Sigmoid colon (tissue), 7 donors: ENCODE measurements at regions of chr16 and their contacts with region 1.

Region 1: GRCh38 chr16:19086322-19087199 is 19.1 kb downstream of the COQ7 start:
- DNase-seq: peak; percentile 90
- H3K4me3 ChIP-seq: peak overlapping the region; percentile 26 to 49 (median 44)
- H3K27ac ChIP-seq: peak overlapping the region in 3 of 4 donors; percentile 4 to 44 (median 40)
- H3K4me1 ChIP-seq: peaks cover 0 to 16% (median 7%) of the 10 kb centered on the region in 4 donors
- H3K27me3 ChIP-seq: no peaks in the 10 kb centered on the region
- CTCF ChIP-seq: peak; percentile 91 to 99 (median 96)
- EP300 ChIP-seq: no peak
- POLR2A ChIP-seq: no peak

Region 2: GRCh38 chr16:19113453-19114351 is 27.1 kb after region 1 on chr16 and contains the start of gene ITPRIPL2:
- intact Hi-C with region 1: loop called (anchors 2 kb)
- DNase-seq: peak; percentile 95
- H3K4me3 ChIP-seq: peak within 1 kb of the TSS; percentile 57 to 90 (median 69)
- H3K27ac ChIP-seq: peak within 1 kb of the TSS; percentile 91 to 97 (median 96)
- H3K4me1 ChIP-seq: peaks cover 0 to 52% (median 43%) of the 10 kb centered on the region in 4 donors
- H3K27me3 ChIP-seq: no peaks in the 10 kb centered on the region
- CTCF ChIP-seq: no peak
- EP300 ChIP-seq: no peak
- POLR2A ChIP-seq: peak; percentile 46 to 71
- total RNA-seq, gene ITPRIPL2: 28.1 to 61.6 (median 44.2) TPM

Region 3: GRCh38 chr16:19167710-19168370 is 81.3 kb after region 1 on chr16 and contains the start of gene SYT17:
- intact Hi-C with region 1: loop called (anchors 1 kb)
- DNase-seq: no peak
- H3K4me3 ChIP-seq: peak within 1 kb of the TSS; percentile 26 to 53 (median 46)
- H3K27ac ChIP-seq: peak within 1 kb of the TSS in 1 of 4 donors; percentile 65
- H3K4me1 ChIP-seq: peaks cover 0 to 18% (median 17%) of the 10 kb centered on the region in 4 donors
- H3K27me3 ChIP-seq: peaks cover 18 to 48% (median 29%) of the 10 kb centered on the region in 3 donors
- CTCF ChIP-seq: peak in 2 of 4 experiments; percentile 31 to 43
- EP300 ChIP-seq: no peak
- POLR2A ChIP-seq: no peak
- total RNA-seq, gene SYT17: 0.68 to 2.5 (median 1.8) TPM

Region 4: DNA sequence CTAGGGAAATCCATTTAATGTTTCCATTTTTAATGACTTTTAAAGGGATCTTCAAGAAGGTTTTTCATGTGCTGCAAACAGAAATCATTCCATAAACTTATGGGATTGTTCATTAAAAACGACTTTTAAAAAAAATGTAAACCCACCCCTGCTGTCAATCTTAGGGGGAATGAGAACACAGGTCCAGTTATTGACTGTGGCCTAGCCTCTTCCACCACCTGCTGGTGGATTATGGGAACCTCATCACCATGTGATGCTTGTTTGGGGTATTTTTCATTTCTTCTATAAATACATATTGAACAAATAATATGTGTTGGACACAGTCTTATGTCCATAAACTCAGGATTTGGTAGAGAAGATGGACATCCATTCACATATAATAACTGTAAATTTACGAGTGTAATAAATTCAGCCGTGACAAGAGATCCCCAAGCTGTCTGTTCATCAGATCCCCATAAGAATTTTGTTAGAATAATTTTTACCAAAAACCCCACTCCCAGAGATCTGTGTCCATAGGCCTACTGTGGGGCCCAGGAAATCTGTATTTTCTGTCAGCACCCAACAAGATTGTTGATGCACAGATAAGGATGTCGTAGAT is 289.1 kb after region 1 on chr16:
- intact Hi-C with region 1: loop called (anchors 1 kb)
- DNase-seq: no peak
- H3K4me3 ChIP-seq: no peak overlapping the region
- H3K27ac ChIP-seq: no peak overlapping the region
- H3K4me1 ChIP-seq: no peaks in the 10 kb centered on the region
- H3K27me3 ChIP-seq: no peaks in the 10 kb centered on the region
- CTCF ChIP-seq: peak; percentile 50 to 92 (median 85)
- EP300 ChIP-seq: no peak
- POLR2A ChIP-seq: no peak

Region 5: DNA sequence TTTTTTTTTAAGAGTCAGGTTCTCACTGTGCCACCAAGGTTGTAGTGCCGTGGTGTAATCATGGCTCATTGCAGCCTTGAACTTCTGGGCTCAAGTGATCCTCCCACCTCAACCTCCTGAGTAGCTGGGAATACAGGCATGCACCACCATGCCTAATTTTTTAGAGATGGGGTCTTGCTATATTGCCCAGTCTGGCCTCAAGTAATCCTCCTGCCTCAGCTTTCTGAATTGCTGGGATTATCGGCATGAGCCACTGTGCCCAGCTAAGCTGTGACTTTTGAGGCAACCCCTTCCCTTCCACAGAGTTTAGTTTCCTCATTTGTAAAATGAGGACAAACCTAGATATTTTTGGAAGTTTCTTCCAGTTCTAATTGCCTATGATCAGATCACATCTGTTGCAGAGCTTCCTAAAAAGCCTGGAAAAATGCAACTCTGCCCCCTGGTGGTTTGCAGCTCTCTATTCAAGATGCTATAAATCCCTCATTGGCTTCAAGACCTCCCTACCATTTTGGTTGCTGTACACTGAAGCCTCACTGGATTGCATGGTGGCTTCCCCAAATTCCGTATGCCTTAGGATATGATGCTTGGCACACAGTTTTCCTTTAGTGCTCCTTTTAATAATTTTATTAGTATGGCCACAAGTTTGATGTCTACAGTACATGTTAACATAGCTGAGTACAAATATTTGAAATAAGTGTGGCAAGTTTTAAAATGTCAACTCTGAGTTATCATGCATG is 416.0 kb after region 1 on chr16:
- intact Hi-C with region 1: loop called (anchors 2 kb)
- DNase-seq: peak; percentile 77
- H3K4me3 ChIP-seq: no peak overlapping the region
- H3K27ac ChIP-seq: no peak overlapping the region
- H3K4me1 ChIP-seq: no peaks in the 10 kb centered on the region
- H3K27me3 ChIP-seq: no peaks in the 10 kb centered on the region
- CTCF ChIP-seq: peak; percentile 12 to 66 (median 55)
- EP300 ChIP-seq: no peak
- POLR2A ChIP-seq: no peak